ENCODE measurements at regions of chr3 and their contacts with region 1.

Region 1: GRCh38 chr3:24494618-24495325 is at the start of gene THRB:
- DNase-seq: peak; percentile 48
- H3K4me3 ChIP-seq: peak within 1 kb of the TSS; percentile 37 to 67 (median 56)
- H3K27ac ChIP-seq: no peak within 1 kb of the TSS
- H3K4me1 ChIP-seq: peaks cover 12% of the 10 kb centered on the region
- H3K27me3 ChIP-seq: peaks cover 25 to 32% of the 10 kb centered on the region in 2 experiments
- CTCF ChIP-seq: peak in 1 of 2 donors; percentile 26
- POLR2A ChIP-seq: no peak
- total RNA-seq, gene THRB: 0.18 TPM in 1 of 2 replicates, not detected in the other

Region 2: DNA sequence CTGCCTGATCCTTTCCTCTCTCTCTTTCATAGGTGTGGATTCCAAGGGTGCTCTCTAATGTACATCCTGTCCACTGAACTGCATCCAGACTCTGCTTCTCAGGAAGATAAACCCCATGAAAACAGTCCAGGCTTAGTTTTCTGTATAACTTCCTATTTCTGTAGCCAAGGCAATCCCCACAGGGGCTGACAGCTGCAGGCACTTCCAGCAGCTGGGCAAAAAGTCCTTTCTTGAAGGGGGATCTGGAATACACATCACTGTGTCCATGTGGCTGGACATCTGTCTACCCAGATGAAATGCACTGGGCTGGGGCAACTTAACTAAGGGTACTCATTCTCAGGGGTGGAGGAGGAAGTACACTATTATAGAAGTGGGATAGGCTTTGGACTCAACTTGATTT is 477.5 kb before region 1 on chr3:
- CTCF ChIA-PET with region 1: no interaction called
- POLR2A ChIA-PET with region 1: no interaction called
- dilution Hi-C with region 1: no loop called
- intact Hi-C with region 1: no loop called
- DNase-seq: no peak
- H3K4me3 ChIP-seq: no peak overlapping the region
- H3K27ac ChIP-seq: no peak overlapping the region
- H3K4me1 ChIP-seq: no peaks in the 10 kb centered on the region
- H3K27me3 ChIP-seq: no peaks in the 10 kb centered on the region
- CTCF ChIP-seq: no peak
- POLR2A ChIP-seq: no peak

Region 3: GRCh38 chr3:24185738-24186384 is 308.9 kb before region 1 on chr3:
- CTCF ChIA-PET with region 1: interaction called, 7 read pairs
- POLR2A ChIA-PET with region 1: no interaction called
- dilution Hi-C with region 1: no loop called
- intact Hi-C with region 1: loop called (anchors 5 kb)
- DNase-seq: peak; percentile 67
- H3K4me3 ChIP-seq: no peak overlapping the region
- H3K27ac ChIP-seq: no peak overlapping the region
- H3K4me1 ChIP-seq: no peaks in the 10 kb centered on the region
- H3K27me3 ChIP-seq: no peaks in the 10 kb centered on the region
- CTCF ChIP-seq: peak; percentile 63 to 65
- POLR2A ChIP-seq: no peak

Region 4: DNA sequence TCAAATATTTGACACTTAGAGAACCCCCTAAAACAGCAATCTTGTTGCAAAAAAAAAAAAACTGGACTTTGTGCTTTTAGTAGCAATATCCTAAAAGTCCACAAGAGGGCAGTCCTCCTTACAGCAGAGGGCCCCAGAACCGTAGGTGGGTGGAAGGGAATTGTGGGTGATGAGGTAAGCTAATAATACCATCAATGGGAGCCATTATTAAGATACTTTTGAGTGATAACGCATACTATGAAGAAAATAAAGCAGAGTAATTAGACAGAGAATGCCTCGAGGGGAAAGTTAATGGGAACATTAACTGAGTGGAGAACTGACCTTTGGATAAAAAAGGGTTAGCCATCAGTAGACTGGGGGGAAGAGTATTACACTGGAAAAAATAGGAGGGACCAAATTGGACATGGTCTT is 230.0 kb before region 1 on chr3:
- CTCF ChIA-PET with region 1: interaction called, 33 read pairs
- POLR2A ChIA-PET with region 1: no interaction called
- dilution Hi-C with region 1: no loop called
- intact Hi-C with region 1: loop called (anchors 1 kb)
- DNase-seq: peak; percentile 58
- H3K4me3 ChIP-seq: no peak overlapping the region
- H3K27ac ChIP-seq: no peak overlapping the region
- H3K4me1 ChIP-seq: no peaks in the 10 kb centered on the region
- H3K27me3 ChIP-seq: no peaks in the 10 kb centered on the region
- CTCF ChIP-seq: peak; percentile 57 to 62
- POLR2A ChIP-seq: no peak

Region 5: GRCh38 chr3:24483873-24484272 is 10.9 kb before region 1 on chr3:
- CTCF ChIA-PET with region 1: interaction called, 25 read pairs
- POLR2A ChIA-PET with region 1: no interaction called
- dilution Hi-C with region 1: no loop called
- intact Hi-C with region 1: no loop called
- DNase-seq: no peak
- H3K4me3 ChIP-seq: no peak overlapping the region
- H3K27ac ChIP-seq: no peak overlapping the region
- H3K4me1 ChIP-seq: no peaks in the 10 kb centered on the region
- H3K27me3 ChIP-seq: peaks cover 10 to 16% of the 10 kb centered on the region in 2 experiments
- CTCF ChIP-seq: no peak
- POLR2A ChIP-seq: no peak

Region 6: GRCh38 chr3:24640330-24640877 is 145.6 kb after region 1 on chr3:
- CTCF ChIA-PET with region 1: interaction called, 6 read pairs
- POLR2A ChIA-PET with region 1: no interaction called
- dilution Hi-C with region 1: no loop called
- intact Hi-C with region 1: loop called (anchors 1 kb)
- DNase-seq: peak; percentile 63
- H3K4me3 ChIP-seq: no peak overlapping the region
- H3K27ac ChIP-seq: no peak overlapping the region
- H3K4me1 ChIP-seq: peaks cover 9% of the 10 kb centered on the region
- H3K27me3 ChIP-seq: no peaks in the 10 kb centered on the region
- CTCF ChIP-seq: peak; percentile 34 to 58
- POLR2A ChIP-seq: no peak

Region 7: DNA sequence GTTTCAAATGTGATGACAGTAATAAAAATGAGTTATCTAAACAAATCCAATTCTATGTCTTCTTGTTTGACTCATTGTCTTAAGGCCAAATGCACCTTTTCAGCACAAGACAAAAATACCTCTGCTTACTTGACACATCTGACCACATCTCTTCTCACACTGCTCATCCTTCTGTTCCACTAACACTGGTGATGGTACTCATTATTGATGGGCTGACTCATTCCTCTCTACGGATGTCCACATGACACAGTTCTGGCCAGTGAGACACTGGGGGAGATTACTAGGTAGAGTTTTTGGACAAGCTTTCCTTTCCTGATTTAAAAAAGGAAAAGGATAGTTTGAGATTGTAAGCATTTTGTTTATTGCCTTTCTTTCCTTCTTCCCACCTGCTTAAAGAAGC is 410.5 kb after region 1 on chr3:
- CTCF ChIA-PET with region 1: no interaction called
- POLR2A ChIA-PET with region 1: no interaction called
- dilution Hi-C with region 1: no loop called
- intact Hi-C with region 1: no loop called
- DNase-seq: no peak
- H3K4me3 ChIP-seq: no peak overlapping the region
- H3K27ac ChIP-seq: no peak overlapping the region
- H3K4me1 ChIP-seq: no peaks in the 10 kb centered on the region
- H3K27me3 ChIP-seq: no peaks in the 10 kb centered on the region
- CTCF ChIP-seq: no peak
- POLR2A ChIP-seq: no peak

Region 8: DNA sequence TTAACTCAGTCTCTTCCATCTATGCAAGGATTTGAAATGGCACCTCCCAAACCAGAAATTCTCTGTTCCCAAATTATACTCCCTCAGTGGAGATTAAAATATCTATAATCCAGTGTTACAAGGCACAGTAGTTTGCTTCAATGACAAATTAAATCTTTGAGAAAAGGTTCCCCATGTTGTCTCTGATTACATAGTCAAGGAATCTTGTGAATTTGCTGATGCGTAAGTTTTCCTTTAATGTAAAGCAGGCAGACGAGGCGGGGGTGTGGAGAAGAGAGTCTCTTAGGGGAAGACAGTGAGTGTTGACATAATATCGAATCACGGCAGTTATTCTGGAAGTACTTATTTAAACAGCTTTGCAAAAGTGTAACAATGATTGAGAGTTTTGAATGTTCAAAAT is 696.9 kb after region 1 on chr3:
- CTCF ChIA-PET with region 1: no interaction called
- POLR2A ChIA-PET with region 1: no interaction called
- dilution Hi-C with region 1: no loop called
- intact Hi-C with region 1: no loop called
- DNase-seq: no peak
- H3K4me3 ChIP-seq: no peak overlapping the region
- H3K27ac ChIP-seq: no peak overlapping the region
- H3K4me1 ChIP-seq: no peaks in the 10 kb centered on the region
- H3K27me3 ChIP-seq: no peaks in the 10 kb centered on the region
- CTCF ChIP-seq: no peak
- POLR2A ChIP-seq: no peak

Measured in endothelial cell of umbilical vein (primary cell).